Gastrocnemius medialis (tissue), 4 donors: ENCODE measurements at regions of chr4 and their contacts with region 1.

Region 1: DNA sequence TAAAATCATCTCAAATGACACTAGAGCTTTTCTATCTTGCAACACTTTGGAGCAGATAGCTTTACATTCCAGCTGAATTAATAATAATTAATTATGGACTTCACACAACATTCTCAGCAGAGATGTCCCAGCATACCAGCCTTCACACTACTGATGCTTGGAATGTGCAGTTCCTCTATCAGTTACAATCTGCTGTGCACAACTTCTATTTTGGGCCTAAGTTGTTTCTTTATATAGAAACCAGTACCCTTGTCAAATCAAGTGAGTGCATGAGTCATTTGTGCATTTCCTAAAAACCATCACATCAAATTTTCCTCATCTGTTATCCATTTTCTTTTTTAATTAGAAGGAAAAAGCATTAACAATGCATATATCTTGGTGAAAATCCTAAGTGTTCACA is 8.8 kb upstream of the RASL11B start:
- DNase-seq: no peak
- ATAC-seq: peak; percentile 89 to 96
- H3K4me3 ChIP-seq: no peak overlapping the region
- H3K27ac ChIP-seq: peak overlapping the region in 1 of 4 donors; percentile 63
- H3K4me1 ChIP-seq: peaks cover 0 to 17% of the 10 kb centered on the region in 2 donors
- H3K27me3 ChIP-seq: no peaks in the 10 kb centered on the region
- CTCF ChIP-seq: no peak
- POLR2A ChIP-seq: no peak

Region 2: GRCh38 chr4:52560844-52561280 is 292.5 kb before region 1 on chr4:
- in situ Hi-C with region 1: no loop called
- intact Hi-C with region 1: no loop called
- DNase-seq: no peak
- ATAC-seq: no peak
- H3K4me3 ChIP-seq: no peak overlapping the region
- H3K27ac ChIP-seq: no peak overlapping the region
- H3K4me1 ChIP-seq: no peaks in the 10 kb centered on the region
- H3K27me3 ChIP-seq: no peaks in the 10 kb centered on the region
- CTCF ChIP-seq: no peak
- POLR2A ChIP-seq: no peak

Region 3: DNA sequence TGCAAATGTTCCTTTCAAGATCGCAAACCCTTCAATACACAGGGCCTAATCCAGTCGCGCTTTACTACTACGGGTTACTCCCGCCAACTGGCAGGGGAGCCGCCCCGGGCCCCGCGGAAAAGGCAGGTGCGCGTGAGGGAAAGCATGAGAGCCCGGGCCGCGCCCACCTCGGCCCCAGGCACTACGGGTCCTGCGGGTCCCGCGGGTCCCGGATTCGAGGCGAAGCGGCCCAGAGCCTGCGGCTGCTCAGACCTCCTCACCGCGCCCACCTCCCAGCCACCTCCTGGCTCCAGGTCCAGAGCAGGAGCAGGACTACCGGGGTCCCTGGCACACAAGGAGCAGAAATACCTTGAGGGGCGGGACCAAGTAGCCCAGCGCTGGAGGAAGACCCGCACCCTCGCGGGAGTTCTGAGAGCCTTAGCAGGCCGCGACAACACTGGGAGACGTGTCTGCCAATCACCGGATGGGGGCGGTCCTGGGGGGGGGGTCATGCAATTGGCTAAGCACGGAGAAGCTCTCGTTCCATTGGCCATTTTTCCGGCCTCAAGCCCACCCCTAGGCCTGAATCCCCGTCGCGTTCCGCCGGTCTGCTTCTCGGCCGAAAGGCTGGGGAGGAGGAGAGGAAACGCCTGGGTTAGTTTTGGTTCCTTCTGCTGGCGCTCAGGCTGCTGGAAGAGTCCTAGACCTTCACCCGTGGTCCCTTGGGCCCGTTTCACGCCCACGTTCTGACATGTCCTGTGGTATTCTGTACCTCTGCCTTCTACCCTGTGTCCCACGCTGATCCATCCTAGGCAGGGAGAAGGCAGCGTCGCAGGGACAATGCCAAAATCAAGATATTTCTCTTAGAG is 131.2 kb before region 1 on chr4:
- in situ Hi-C with region 1: loop called in 2 of 4 experiments (anchors 10 kb)
- intact Hi-C with region 1: no loop called
- DNase-seq: peak; percentile 93 to 94
- ATAC-seq: peak; percentile 99
- H3K4me3 ChIP-seq: peak overlapping the region; percentile 74 to 96 (median 79)
- H3K27ac ChIP-seq: peak overlapping the region; percentile 83 to 96 (median 92)
- H3K4me1 ChIP-seq: peaks cover 7% of the 10 kb centered on the region in 2 donors
- H3K27me3 ChIP-seq: no peaks in the 10 kb centered on the region
- CTCF ChIP-seq: no peak
- POLR2A ChIP-seq: peak; percentile 32 to 61

Region 4: DNA sequence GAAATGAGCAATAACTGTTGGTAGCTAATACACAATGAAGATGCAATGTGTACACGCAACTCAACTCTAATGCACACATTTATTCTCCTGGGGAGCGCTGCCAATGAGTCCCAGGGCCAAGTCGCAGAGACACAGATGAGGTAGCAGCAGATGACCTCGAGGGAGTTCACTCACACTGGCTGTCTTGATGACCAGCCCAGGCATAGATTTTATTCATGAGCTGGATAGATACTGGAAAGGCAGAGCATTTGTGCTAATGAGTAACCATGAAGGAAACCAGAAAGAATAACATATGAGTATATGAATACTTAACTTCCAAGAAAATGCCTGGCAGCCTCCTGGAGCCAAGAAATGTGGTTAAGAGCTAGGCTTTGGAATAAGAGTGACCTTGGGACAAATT is 51.1 kb after region 1 on chr4:
- in situ Hi-C with region 1: no loop called
- intact Hi-C with region 1: no loop called
- DNase-seq: no peak
- ATAC-seq: no peak
- H3K4me3 ChIP-seq: no peak overlapping the region
- H3K27ac ChIP-seq: no peak overlapping the region
- H3K4me1 ChIP-seq: peaks cover 4 to 5% of the 10 kb centered on the region in 2 donors
- H3K27me3 ChIP-seq: no peaks in the 10 kb centered on the region
- CTCF ChIP-seq: no peak
- POLR2A ChIP-seq: no peak

Region 5: GRCh38 chr4:53346920-53347852 is 493.8 kb after region 1 on chr4:
- in situ Hi-C with region 1: no loop called
- intact Hi-C with region 1: no loop called
- DNase-seq: no peak
- ATAC-seq: no peak
- H3K4me3 ChIP-seq: no peak overlapping the region
- H3K27ac ChIP-seq: no peak overlapping the region
- H3K4me1 ChIP-seq: peaks cover 7 to 9% of the 10 kb centered on the region in 2 donors
- H3K27me3 ChIP-seq: no peaks in the 10 kb centered on the region
- CTCF ChIP-seq: no peak
- POLR2A ChIP-seq: no peak